MCF 10A (cell line): ENCODE measurements at regions of chr1 and their contacts with region 1.

Region 1: DNA sequence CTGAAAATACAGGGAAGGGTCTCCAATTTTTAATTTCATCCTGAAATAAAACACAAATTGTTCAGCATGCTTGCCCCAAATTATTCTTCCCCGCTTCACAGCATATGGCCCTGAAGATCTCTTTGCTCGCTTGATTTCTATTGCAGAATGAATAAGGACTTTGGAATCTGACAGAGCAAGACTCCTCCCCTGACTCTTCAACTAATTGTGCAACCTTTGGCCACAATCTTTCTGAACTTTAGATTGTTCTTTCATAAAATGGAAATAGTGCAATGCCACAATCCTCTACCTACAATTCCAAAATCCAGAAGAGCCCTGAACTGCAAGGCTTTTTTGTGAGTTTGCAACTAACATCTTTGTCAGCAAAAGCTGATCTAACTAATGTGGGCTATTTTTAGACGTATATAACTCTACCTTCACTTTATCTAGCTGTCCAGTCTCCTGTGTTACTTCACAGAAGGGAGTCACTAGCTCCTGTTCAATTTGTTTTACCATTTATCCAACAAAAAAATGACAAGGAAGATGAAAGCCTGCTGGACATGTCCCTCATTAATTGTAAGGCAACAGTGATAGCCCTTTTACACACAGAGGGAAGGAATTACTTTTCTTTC is 13.4 kb downstream of the RNASEL start:
- DNase-seq: peak; percentile 81
- H3K4me3 Mint-ChIP-seq: no peak overlapping the region
- H3K27ac Mint-ChIP-seq: no peak overlapping the region
- H3K4me1 Mint-ChIP-seq: peaks cover 12% of the 10 kb centered on the region
- H3K27me3 Mint-ChIP-seq: no peaks in the 10 kb centered on the region
- CTCF ChIP-seq: no peak

Region 2: GRCh38 chr1:182159443-182159842 is 416.2 kb before region 1 on chr1:
- CTCF ChIA-PET with region 1: no interaction called
- POLR2A ChIA-PET with region 1: no interaction called
- intact Hi-C with region 1: no loop called
- DNase-seq: no peak
- H3K4me3 Mint-ChIP-seq: no peak overlapping the region
- H3K27ac Mint-ChIP-seq: no peak overlapping the region
- H3K4me1 Mint-ChIP-seq: no peaks in the 10 kb centered on the region
- H3K27me3 Mint-ChIP-seq: no peaks in the 10 kb centered on the region
- CTCF ChIP-seq: no peak

Region 3: DNA sequence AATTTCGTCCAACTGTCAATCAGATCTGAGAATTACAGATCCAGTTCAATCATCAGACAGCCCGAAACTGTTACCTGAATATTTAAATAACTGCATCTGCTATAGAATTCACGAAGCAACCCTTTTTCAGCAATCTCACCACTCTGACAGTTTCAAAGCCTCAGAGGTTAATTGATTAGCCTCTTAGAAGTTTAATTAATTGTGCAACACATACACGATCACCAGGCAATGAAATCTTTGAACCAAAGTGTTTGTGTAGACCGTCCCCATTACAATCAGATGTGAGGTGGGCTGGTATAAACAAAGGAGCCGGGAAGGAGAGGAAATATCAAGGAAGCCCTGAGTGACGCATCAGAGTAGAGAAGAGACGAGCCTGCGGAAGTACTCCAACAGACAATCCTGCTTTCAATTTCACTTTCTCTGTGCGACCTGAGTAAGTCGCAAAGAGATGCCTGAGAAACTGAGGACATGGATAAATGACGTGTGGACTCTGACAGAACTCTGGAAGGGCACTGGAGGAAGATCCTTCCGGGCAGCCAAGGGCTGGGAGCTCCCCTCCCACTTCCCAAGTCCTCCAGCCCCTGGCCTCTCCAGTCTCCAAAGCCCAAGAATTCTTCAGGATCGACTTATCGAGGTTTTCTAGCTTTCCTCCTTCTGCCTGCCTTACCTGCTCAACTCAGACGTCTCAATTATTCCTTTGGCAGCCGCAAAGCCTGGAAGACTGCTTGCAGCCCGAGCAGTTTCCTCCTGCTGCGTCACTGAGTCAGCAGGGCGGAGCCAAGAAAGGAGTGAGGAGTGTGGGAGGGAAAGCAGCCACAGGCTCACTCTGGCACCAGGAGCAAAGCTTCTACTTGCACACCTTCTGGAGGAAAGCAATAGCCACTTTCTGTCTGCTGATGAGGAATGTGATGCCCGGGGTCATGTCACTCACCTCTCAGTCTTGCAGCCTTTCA is 13.1 kb after region 1 on chr1 and contains the start of gene RNASEL:
- CTCF ChIA-PET with region 1: interaction called, 5 read pairs
- POLR2A ChIA-PET with region 1: interaction called, 14 read pairs
- intact Hi-C with region 1: no loop called
- DNase-seq: peak; percentile 85
- H3K4me3 Mint-ChIP-seq: peak within 1 kb of the TSS; percentile 84
- H3K27ac Mint-ChIP-seq: peak within 1 kb of the TSS; percentile 93
- H3K4me1 Mint-ChIP-seq: peaks cover 5% of the 10 kb centered on the region
- H3K27me3 Mint-ChIP-seq: no peaks in the 10 kb centered on the region
- CTCF ChIP-seq: no peak
- total RNA-seq, gene RNASEL: 4.2 and 8.0 TPM in 2 replicates